ENCODE measurements at regions of chr6 and their contacts with region 1.

Region 1: DNA sequence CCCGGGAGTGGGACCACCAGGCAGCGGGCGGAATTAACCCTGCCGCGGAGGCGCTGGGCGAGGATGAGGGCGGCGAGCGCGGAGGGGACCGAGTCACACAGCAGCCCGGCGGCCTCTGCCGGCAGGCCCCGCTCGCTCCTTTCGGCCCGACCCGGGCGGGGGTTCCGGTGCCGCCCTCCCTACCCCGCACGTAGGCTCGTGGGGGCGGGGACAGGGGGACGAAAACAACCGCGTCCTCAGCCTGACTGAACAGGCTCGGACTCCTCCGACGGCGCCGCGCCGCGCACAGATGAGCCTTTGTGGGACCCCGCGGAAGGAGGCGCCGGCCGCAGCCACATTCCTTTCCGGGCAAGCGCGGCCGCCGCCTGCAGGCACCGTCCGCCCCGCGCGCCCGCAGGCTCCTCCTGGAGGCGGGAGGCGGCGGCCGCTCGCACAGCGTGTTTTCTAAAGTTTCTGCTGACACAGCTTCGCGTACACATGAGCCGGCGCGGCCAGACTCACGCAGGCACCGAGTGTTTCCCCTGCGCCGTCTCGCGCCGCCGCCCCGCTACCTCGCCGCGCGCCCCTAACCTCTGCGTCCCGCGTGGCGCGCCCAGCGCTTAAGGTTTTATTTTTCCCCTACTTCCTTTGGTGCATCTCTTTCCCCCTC is 244.3 kb downstream of the ARID1B start:
- DNase-seq: peak; percentile 90 to 97
- H3K4me3 ChIP-seq: peak overlapping the region; percentile 56 to 86 (median 70)
- H3K27ac ChIP-seq: peak overlapping the region; percentile 92 to 100 (median 99)
- H3K4me1 ChIP-seq: peaks cover 9 to 57% (median 38%) of the 10 kb centered on the region in 4 donors
- H3K27me3 ChIP-seq: no peaks in the 10 kb centered on the region
- CTCF ChIP-seq: peak in 3 of 7 experiments; percentile 25 to 61 (median 27)
- EP300 ChIP-seq: no peak
- POLR2A ChIP-seq: peak in 2 of 4 donors; percentile 53 to 88

Region 2: DNA sequence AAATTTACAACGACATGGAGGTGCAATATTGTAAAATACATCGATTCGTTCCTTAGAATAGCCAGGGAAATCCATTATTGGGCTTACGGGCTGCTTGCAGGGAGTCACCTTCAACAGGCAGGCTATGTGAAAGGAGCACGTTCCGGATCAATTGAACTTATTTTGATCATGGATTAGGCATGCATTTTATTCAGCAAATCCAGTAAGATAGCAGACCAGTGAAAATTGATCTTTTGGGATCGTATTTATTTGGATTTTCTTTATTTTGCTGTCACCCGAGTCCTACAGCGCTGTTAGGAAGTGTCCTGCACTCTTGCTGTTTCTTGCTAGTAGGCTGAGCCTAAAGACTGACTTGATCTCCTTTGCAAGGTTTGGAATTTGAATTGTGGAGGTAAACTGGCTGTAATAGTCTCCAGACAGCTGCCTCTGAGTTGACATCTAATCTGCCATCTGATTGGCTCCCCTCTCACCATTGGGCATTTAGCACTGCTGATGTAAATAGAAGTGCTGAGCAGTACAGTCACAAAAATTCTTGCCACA is 241.3 kb before region 1 on chr6:
- intact Hi-C with region 1: loop called (anchors 10 kb)
- DNase-seq: peak; percentile 56 to 89
- H3K4me3 ChIP-seq: peak overlapping the region; percentile 84 to 95 (median 89)
- H3K27ac ChIP-seq: peak overlapping the region; percentile 90 to 100 (median 98)
- H3K4me1 ChIP-seq: peaks cover 17 to 63% (median 43%) of the 10 kb centered on the region in 4 donors
- H3K27me3 ChIP-seq: no peaks in the 10 kb centered on the region
- CTCF ChIP-seq: no peak
- EP300 ChIP-seq: no peak
- POLR2A ChIP-seq: no peak

Measured in stomach (tissue), 19 donors.